ENCODE measurements at regions of chr10 and their contacts with region 1.

Region 1: GRCh38 chr10:97037365-97038361 is 148.1 kb downstream of the SLIT1 start:
- DNase-seq: peak; percentile 77
- ATAC-seq: peak; percentile 87
- H3K4me3 Mint-ChIP-seq: peak overlapping the region; percentile 36
- H3K27ac Mint-ChIP-seq: peak overlapping the region; percentile 36
- H3K4me1 Mint-ChIP-seq: peaks cover 10% of the 10 kb centered on the region
- H3K27me3 Mint-ChIP-seq: peaks cover 2% of the 10 kb centered on the region

Region 2: DNA sequence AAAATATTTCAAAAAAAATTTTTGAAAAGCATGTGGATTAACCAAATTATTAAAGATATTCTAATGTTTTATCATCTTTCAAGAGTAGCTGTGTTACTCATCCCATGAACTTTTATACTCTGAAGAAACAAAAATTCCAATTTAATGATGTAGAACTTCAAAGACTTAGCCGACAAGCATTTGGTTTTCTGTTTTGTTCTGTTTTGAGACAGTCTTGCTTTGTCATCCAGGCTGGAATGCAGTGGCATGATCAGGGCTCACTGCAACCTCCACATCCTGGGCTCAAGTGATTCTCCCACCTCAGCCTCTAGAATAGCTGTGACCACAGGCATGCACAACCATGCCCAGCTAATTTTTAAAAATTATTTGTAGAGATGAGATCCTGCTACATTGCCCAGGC is 223.4 kb before region 1 on chr10:
- CTCF ChIA-PET with region 1: no interaction called
- POLR2A ChIA-PET with region 1: no interaction called
- DNase-seq: no peak
- ATAC-seq: no peak
- H3K4me3 Mint-ChIP-seq: no peak overlapping the region
- H3K27ac Mint-ChIP-seq: no peak overlapping the region
- H3K4me1 Mint-ChIP-seq: no peaks in the 10 kb centered on the region
- H3K27me3 Mint-ChIP-seq: peaks cover 19% of the 10 kb centered on the region

Region 3: DNA sequence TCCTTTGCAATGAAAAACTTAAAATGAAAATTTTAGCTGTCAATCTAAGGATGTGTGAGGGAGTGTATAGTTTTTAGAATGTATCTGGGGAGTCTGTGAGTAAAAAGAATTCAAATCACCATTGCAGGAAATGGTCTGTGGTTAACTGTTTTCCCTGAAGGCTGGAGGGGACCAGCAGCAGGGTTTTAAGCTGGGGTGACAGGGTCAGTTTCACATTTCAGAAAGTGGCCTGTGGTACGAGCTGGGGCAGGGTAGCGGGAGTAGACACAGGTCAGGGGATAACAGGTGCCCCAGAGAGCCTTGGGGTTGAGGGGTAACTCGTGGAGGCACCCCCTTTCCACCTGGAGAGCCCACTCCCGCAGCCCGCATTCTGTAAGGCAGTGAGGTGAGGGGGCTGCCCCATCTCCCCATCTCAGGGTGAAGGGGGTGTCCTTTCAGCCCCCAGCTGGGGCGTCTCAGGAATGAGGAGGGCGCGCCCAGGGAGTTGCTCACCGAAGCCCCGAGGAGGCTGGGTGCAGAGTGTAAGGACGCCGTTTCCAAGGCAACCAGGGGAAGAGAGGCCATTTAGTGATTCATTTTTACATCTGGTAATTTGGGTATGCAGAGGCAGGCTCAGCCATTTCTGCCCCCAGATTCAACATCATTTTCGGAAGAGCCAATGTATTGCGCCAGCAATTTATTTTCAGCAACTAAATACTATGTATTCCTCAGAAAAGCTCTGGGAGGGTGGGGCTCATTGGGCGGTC is 20.8 kb before region 1 on chr10:
- CTCF ChIA-PET with region 1: interaction called, 14 read pairs
- POLR2A ChIA-PET with region 1: interaction called, 3 read pairs
- DNase-seq: peak; percentile 63
- ATAC-seq: peak; percentile 82
- H3K4me3 Mint-ChIP-seq: peak overlapping the region; percentile 69
- H3K27ac Mint-ChIP-seq: peak overlapping the region; percentile 92
- H3K4me1 Mint-ChIP-seq: peaks cover 31% of the 10 kb centered on the region
- H3K27me3 Mint-ChIP-seq: no peaks in the 10 kb centered on the region

Region 4: GRCh38 chr10:97050205-97050745 is 12.6 kb after region 1 on chr10:
- CTCF ChIA-PET with region 1: interaction called, 14 read pairs
- POLR2A ChIA-PET with region 1: no interaction called
- DNase-seq: no peak
- ATAC-seq: no peak
- H3K4me3 Mint-ChIP-seq: no peak overlapping the region
- H3K27ac Mint-ChIP-seq: no peak overlapping the region
- H3K4me1 Mint-ChIP-seq: no peaks in the 10 kb centered on the region
- H3K27me3 Mint-ChIP-seq: peaks cover 8% of the 10 kb centered on the region

Region 5: GRCh38 chr10:97072851-97073665 is 35.4 kb after region 1 on chr10:
- CTCF ChIA-PET with region 1: interaction called, 18 read pairs
- POLR2A ChIA-PET with region 1: no interaction called
- DNase-seq: peak; percentile 84
- ATAC-seq: peak; percentile 84
- H3K4me3 Mint-ChIP-seq: no peak overlapping the region
- H3K27ac Mint-ChIP-seq: no peak overlapping the region
- H3K4me1 Mint-ChIP-seq: peaks cover 9% of the 10 kb centered on the region
- H3K27me3 Mint-ChIP-seq: peaks cover 19% of the 10 kb centered on the region

Region 6: DNA sequence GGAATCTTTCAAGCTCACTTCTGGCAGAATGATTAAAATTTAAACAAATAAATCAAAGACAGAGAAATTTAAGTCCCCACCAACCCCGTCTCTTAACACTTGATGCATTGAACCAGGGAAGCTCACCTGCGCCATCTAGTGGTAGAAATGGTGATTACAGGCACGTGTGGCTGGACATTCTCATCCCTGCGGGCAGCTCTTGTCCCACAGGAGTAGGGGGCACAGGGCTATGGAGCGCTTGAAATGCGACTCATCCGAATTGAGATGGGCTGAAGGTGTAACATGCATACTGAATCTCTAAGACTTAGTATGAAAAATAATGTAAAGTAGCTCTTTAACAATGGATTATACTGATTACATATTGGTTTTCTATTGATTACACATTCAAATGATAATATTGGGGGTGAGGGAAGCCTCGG is 172.9 kb after region 1 on chr10:
- CTCF ChIA-PET with region 1: interaction called, 46 read pairs
- POLR2A ChIA-PET with region 1: no interaction called
- DNase-seq: peak; percentile 79
- ATAC-seq: peak; percentile 76
- H3K4me3 Mint-ChIP-seq: no peak overlapping the region
- H3K27ac Mint-ChIP-seq: no peak overlapping the region
- H3K4me1 Mint-ChIP-seq: no peaks in the 10 kb centered on the region
- H3K27me3 Mint-ChIP-seq: no peaks in the 10 kb centered on the region

Measured in activated CD8-positive, alpha-beta T cell treated with anti-CD3 and anti-CD28 coated beads, Interleukin-2, amount 10 ng/mL, durations not matched to agents 7 days and 5 days (primary cell).